ENCODE measurements at regions of chr1 and their contacts with region 1.

Region 1: DNA sequence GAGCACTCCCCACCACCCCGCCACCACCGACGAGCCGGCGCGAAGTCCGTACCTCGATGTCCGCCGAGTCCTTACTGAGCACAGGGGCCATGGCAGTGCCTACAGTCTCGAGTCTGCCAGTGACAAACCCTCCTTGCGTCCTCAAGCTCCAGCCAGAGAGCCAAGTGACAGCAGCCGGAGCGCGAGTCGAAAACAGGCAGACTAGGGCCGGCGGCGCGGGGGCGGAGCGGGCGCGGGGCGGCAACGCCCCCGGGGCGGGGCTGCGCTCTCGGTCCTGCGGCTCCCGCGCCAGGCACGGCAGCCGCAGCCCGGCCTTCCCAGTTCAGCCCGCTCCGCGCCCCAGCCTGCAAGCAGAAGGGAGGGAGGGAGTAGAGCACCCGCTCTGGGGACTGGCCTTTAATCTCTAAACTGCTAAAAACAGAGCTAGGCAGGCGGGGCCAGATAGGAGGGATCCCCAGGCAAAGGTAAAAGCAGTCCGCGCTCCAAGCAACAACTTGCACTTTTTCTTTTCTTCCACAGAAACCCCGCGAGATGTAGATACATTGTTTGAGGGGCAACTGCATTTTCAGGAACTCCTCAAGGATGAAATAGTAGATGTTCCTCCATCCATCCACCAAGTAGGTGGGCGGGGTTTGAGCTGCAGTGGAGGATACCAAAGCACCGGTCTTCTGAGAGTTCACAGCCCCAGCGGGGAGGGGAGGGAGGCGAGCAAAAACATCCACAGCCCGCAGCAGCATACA is at the start of gene DPYD:
- DNase-seq: peak; percentile 79 to 87 (median 84)
- ATAC-seq: peak; percentile 94
- H3K4me3 ChIP-seq: peak within 1 kb of the TSS; percentile 93
- H3K4me3 Mint-ChIP-seq: peak within 1 kb of the TSS; percentile 88 to 99 (median 98)
- H3K27ac ChIP-seq: peak within 1 kb of the TSS; percentile 90
- H3K27ac Mint-ChIP-seq: peak within 1 kb of the TSS; percentile 81 to 98 (median 96)
- H3K4me1 ChIP-seq: peaks cover 16 to 17% of the 10 kb centered on the region in 2 donors
- H3K4me1 Mint-ChIP-seq: peaks cover 35 to 57% (median 54%) of the 10 kb centered on the region in 7 donors
- H3K27me3 ChIP-seq: no peaks in the 10 kb centered on the region
- H3K27me3 Mint-ChIP-seq: no peaks in the 10 kb centered on the region
- total RNA-seq, gene DPYD: 52.6 to 87.2 (median 57.4) TPM

Region 2: DNA sequence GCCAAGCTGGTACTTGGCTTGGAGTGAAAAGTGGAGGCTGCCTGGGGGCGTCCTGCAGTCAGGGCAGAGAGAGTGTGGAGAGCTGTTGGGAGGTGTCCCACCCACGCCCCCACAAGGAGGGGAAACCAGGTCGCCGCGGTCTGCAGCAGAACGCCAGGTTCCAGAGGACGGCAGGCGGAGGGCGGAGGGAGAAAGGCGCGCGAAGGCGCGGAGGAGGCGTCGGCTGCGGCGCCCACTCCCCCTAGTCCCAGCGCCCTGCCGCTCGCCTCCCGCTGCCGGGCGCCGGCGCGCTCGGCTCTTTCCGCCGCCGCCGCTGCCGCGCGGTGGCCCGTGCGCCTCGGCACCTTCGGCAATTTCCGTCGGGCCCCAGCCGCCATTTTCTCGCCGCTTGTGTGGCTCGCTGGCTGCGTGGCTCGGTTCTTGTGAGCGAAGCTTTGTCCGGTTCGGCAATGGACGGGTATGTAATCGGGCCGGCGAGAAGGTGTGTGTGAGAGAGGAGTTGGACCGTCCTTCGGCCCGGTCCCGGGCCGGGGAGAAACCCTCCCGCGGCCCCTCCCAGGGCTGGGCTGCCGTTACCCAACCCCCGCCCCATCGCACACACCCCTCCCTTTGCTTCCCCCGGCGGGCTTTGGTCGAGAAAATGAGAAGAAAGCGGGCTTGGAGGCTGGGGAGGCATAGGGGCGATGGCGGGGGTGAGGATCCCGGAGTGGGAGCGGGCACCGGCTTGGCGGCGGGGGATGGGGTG is 1199.4 kb before region 1 on chr1 and contains the start of gene PTBP2:
- CTCF ChIA-PET with region 1: no interaction called
- POLR2A ChIA-PET with region 1: no interaction called
- intact Hi-C with region 1: loop called (anchors 2 to 5 kb)
- DNase-seq: peak; percentile 75 to 90 (median 86)
- ATAC-seq: peak; percentile 93
- H3K4me3 ChIP-seq: peak within 1 kb of the TSS; percentile 89
- H3K4me3 Mint-ChIP-seq: peak within 1 kb of the TSS; percentile 88 to 99 (median 97)
- H3K27ac ChIP-seq: peak within 1 kb of the TSS; percentile 84
- H3K27ac Mint-ChIP-seq: peak within 1 kb of the TSS; percentile 83 to 97 (median 95)
- H3K4me1 ChIP-seq: peaks cover 10 to 11% of the 10 kb centered on the region in 2 donors
- H3K4me1 Mint-ChIP-seq: peaks cover 17 to 35% (median 29%) of the 10 kb centered on the region in 7 donors
- H3K27me3 ChIP-seq: no peaks in the 10 kb centered on the region
- H3K27me3 Mint-ChIP-seq: peaks cover 0 to 16% (median 0%) of the 10 kb centered on the region in 5 donors
- total RNA-seq, gene PTBP2: 14.9 to 32.6 (median 25.6) TPM

Region 3: DNA sequence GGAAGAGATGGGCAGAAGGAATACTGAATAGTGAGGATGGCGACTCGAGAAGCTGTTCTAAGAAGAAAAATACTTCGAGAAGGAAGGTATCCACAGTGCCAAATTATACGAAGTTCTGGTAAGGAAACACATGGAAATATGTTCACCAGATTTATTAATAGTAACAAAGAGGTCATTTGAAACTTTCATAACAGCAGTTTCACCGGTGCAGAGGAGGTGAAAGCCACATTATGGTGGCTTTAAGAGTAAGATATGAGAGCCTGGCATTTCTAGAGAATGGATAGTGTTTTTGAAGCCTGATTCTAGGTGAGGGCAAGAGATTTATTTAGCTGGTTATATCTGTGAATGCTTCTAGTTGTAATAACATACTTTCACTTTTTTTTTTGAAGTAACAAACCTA is 56.4 kb before region 1 on chr1:
- CTCF ChIA-PET with region 1: no interaction called
- POLR2A ChIA-PET with region 1: no interaction called
- intact Hi-C with region 1: loop called in 1 of 2 experiments (anchors 5 kb)
- DNase-seq: no peak
- ATAC-seq: no peak
- H3K4me3 ChIP-seq: no peak overlapping the region
- H3K4me3 Mint-ChIP-seq: peak overlapping the region in 2 of 10 donors; percentile 5 to 49
- H3K27ac ChIP-seq: no peak overlapping the region
- H3K27ac Mint-ChIP-seq: peak overlapping the region in 1 of 9 donors; percentile 56
- H3K4me1 ChIP-seq: peaks cover 0 to 4% of the 10 kb centered on the region in 2 donors
- H3K4me1 Mint-ChIP-seq: peaks cover 15 to 56% (median 41%) of the 10 kb centered on the region in 7 donors
- H3K27me3 ChIP-seq: no peaks in the 10 kb centered on the region
- H3K27me3 Mint-ChIP-seq: no peaks in the 10 kb centered on the region

Region 4: DNA sequence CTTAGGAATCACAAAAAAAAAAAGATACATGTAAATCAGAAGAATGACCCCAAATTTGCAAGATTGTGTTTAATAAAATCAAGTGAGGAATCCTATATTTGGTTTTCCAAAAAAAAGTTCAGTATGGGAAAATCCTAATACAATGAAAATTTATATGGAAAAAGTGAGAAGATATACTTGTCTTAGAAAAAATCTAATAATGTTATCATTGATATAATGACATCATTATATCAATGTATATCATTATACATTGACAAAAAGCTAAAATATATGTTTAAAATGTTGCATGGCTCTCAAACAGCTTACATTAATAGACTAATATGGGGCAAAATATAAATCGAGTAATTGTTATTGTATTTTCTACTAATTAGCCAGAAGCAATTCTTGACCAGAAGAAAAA is 37.2 kb before region 1 on chr1:
- CTCF ChIA-PET with region 1: interaction called, 3 read pairs
- POLR2A ChIA-PET with region 1: no interaction called
- intact Hi-C with region 1: loop called in 1 of 2 experiments (anchors 5 kb)
- DNase-seq: no peak
- ATAC-seq: no peak
- H3K4me3 ChIP-seq: no peak overlapping the region
- H3K4me3 Mint-ChIP-seq: no peak overlapping the region
- H3K27ac ChIP-seq: no peak overlapping the region
- H3K27ac Mint-ChIP-seq: no peak overlapping the region
- H3K4me1 ChIP-seq: peaks cover 0 to 6% of the 10 kb centered on the region in 2 donors
- H3K4me1 Mint-ChIP-seq: peaks cover 8 to 42% (median 36%) of the 10 kb centered on the region in 7 donors
- H3K27me3 ChIP-seq: no peaks in the 10 kb centered on the region
- H3K27me3 Mint-ChIP-seq: no peaks in the 10 kb centered on the region

Region 5: DNA sequence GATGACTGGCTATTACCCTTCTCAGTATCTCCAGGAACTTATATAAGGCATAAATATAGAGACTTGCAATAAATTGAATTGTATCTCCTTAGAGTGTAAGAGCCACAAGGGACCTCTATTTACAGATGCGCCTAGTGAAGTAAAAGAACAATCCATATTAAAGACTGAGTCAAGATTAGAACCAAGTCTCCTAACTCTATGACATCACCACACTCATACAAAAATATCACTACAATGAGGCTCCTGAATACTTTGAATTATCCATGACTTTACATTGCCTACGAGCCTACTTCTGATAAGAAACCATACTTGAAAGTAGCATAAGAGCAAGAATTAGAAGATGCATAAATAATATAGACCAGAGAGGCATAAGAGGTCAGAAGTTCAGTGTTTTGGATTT is 18.9 kb before region 1 on chr1:
- CTCF ChIA-PET with region 1: no interaction called
- POLR2A ChIA-PET with region 1: interaction called, 4 read pairs
- intact Hi-C with region 1: loop called in 1 of 2 experiments (anchors 1 kb)
- DNase-seq: no peak
- ATAC-seq: no peak
- H3K4me3 ChIP-seq: no peak overlapping the region
- H3K4me3 Mint-ChIP-seq: peak overlapping the region in 6 of 10 donors; percentile 8 to 47 (median 35)
- H3K27ac ChIP-seq: no peak overlapping the region
- H3K27ac Mint-ChIP-seq: peak overlapping the region in 3 of 9 donors; percentile 1 to 55 (median 43)
- H3K4me1 ChIP-seq: peaks cover 0 to 12% of the 10 kb centered on the region in 2 donors
- H3K4me1 Mint-ChIP-seq: peaks cover 23 to 58% (median 48%) of the 10 kb centered on the region in 7 donors
- H3K27me3 ChIP-seq: no peaks in the 10 kb centered on the region
- H3K27me3 Mint-ChIP-seq: no peaks in the 10 kb centered on the region

Region 6: GRCh38 chr1:97938285-97938642 is 17.3 kb after region 1 on chr1:
- CTCF ChIA-PET with region 1: no interaction called
- POLR2A ChIA-PET with region 1: interaction called, 5 read pairs
- intact Hi-C with region 1: loop called (anchors 1 kb)
- DNase-seq: no peak
- ATAC-seq: no peak
- H3K4me3 ChIP-seq: no peak overlapping the region
- H3K4me3 Mint-ChIP-seq: no peak overlapping the region
- H3K27ac ChIP-seq: no peak overlapping the region
- H3K27ac Mint-ChIP-seq: no peak overlapping the region
- H3K4me1 ChIP-seq: peaks cover 4 to 17% of the 10 kb centered on the region in 2 donors
- H3K4me1 Mint-ChIP-seq: peaks cover 17 to 53% (median 32%) of the 10 kb centered on the region in 7 donors
- H3K27me3 ChIP-seq: no peaks in the 10 kb centered on the region
- H3K27me3 Mint-ChIP-seq: peaks cover 0 to 11% (median 0%) of the 10 kb centered on the region in 5 donors

Region 7: GRCh38 chr1:98048244-98048643 is 127.2 kb after region 1 on chr1:
- CTCF ChIA-PET with region 1: interaction called, 3 read pairs
- POLR2A ChIA-PET with region 1: no interaction called
- intact Hi-C with region 1: loop called (anchors 1 kb)
- DNase-seq: peak; percentile 38 to 75 (median 69)
- ATAC-seq: peak; percentile 88
- H3K4me3 ChIP-seq: no peak overlapping the region
- H3K4me3 Mint-ChIP-seq: peak overlapping the region in 9 of 10 donors; percentile 5 to 54 (median 38)
- H3K27ac ChIP-seq: no peak overlapping the region
- H3K27ac Mint-ChIP-seq: peak overlapping the region in 3 of 9 donors; percentile 6 to 43 (median 6)
- H3K4me1 ChIP-seq: peaks cover 6 to 20% of the 10 kb centered on the region in 2 donors
- H3K4me1 Mint-ChIP-seq: peaks cover 20 to 49% (median 45%) of the 10 kb centered on the region in 7 donors
- H3K27me3 ChIP-seq: peaks cover 25 to 46% of the 10 kb centered on the region in 2 donors
- H3K27me3 Mint-ChIP-seq: peaks cover 84 to 93% (median 87%) of the 10 kb centered on the region in 5 donors

Region 8: GRCh38 chr1:98188774-98189173 is 267.8 kb after region 1 on chr1:
- CTCF ChIA-PET with region 1: no interaction called
- POLR2A ChIA-PET with region 1: no interaction called
- intact Hi-C with region 1: no loop called
- DNase-seq: no peak
- ATAC-seq: no peak
- H3K4me3 ChIP-seq: no peak overlapping the region
- H3K4me3 Mint-ChIP-seq: no peak overlapping the region
- H3K27ac ChIP-seq: no peak overlapping the region
- H3K27ac Mint-ChIP-seq: no peak overlapping the region
- H3K4me1 ChIP-seq: no peaks in the 10 kb centered on the region
- H3K4me1 Mint-ChIP-seq: peaks cover 0 to 3% (median 0%) of the 10 kb centered on the region in 7 donors
- H3K27me3 ChIP-seq: no peaks in the 10 kb centered on the region
- H3K27me3 Mint-ChIP-seq: peaks cover 0 to 5% (median 0%) of the 10 kb centered on the region in 5 donors